Esophagus muscularis mucosa (tissue), 4 donors: ENCODE measurements at regions of chr16 and their contacts with region 1.

Region 1: GRCh38 chr16:69565671-69566239 is at the start of gene NFAT5:
- DNase-seq: peak; percentile 96
- H3K4me3 ChIP-seq: peak within 1 kb of the TSS; percentile 71 to 98 (median 92)
- H3K27ac ChIP-seq: peak within 1 kb of the TSS; percentile 98 to 99 (median 99)
- H3K4me1 ChIP-seq: peaks cover 28 to 55% (median 49%) of the 10 kb centered on the region in 4 donors
- H3K27me3 ChIP-seq: no peaks in the 10 kb centered on the region
- CTCF ChIP-seq: peak in 1 of 3 experiments; percentile 10
- EP300 ChIP-seq: no peak
- POLR2A ChIP-seq: peak; percentile 82
- total RNA-seq, gene NFAT5: 47.1 to 68.4 (median 59.6) TPM

Region 2: DNA sequence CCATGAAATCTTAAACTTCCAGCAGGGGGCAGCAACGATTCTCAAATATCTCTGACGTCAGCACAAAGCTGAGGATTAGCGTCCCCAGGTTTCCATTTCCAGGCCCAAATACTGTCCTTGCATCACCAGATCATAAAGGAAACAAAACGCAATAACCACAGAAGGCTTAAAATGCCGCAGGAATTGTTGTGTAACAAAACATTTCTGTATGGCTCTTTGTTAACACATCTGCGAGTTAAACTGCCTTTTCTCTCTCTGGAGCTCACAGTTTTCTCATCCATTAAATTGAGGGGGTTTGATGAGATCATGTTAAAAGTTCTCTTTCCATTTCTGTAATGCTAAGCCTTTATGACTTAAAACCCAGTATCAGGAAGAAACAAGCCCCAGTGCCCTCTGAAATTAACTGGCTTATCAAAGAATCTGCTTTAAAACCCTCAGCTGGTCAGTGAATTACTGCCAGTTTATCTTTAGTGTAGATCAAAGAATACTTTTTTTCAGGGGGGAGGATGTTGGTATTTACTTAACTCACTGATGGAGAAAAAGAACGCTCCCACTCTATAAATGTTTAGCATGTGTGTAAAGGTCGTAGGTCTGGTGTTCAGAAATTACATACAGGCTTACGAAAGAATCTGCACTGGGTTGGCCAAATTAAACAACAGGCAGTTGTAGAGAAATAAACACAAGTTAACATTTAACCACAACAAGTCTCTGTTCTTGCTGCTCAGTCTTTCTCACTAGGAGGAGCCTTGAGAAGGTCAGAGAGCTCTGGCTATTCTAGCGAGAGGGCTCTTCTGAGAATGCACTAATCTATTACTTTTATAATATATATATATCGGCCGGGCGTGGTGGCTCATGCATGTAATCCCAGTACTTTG is 169.3 kb before region 1 on chr16:
- intact Hi-C with region 1: loop called (anchors 5 kb)
- DNase-seq: no peak
- H3K4me3 ChIP-seq: peak overlapping the region in 1 of 4 donors; percentile 6
- H3K27ac ChIP-seq: peak overlapping the region; percentile 77 to 84 (median 80)
- H3K4me1 ChIP-seq: peaks cover 19 to 31% (median 26%) of the 10 kb centered on the region in 4 donors
- H3K27me3 ChIP-seq: no peaks in the 10 kb centered on the region
- CTCF ChIP-seq: peak; percentile 73 to 82 (median 81)
- EP300 ChIP-seq: no peak
- POLR2A ChIP-seq: no peak

Region 3: DNA sequence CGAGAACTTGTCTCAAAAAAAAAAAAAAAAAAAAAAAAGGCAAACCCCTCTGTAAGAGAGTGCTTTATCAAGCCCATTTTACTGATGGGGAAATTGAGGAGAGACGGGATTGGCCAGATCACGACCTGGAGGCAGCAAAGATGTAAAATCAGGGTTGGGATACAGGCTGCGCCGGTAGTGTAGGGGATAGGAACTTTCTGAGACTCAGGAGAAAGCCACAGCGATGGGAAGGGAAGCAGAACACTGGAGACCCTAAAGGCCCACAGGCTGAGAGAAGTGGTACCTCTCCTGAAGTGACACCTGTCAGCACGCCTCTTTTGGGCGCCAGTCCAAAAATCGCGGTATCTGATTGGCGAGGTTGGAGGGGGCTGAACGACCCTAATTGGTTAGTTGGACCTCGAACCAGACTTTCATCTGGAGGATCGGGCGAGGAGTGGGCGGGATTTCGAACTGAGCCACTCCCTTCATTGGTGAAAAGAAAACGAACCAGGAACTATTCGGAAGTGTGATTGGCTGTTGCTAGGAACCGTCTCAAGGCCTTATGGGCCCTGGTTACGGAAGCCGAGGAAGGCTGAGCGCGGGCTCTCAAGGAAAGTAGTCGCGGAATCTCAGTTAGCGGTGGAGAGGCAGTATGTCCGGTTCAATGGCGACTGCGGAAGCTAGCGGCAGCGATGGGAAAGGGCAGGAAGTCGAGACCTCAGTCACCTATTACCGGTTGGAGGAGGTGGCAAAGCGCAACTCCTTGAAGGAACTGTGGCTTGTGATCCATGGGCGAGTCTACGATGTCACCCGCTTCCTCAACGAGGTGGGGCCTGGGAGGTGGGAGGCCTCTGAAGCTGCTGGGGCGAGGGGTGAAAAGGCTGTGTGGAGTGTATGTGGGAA is 141.5 kb before region 1 on chr16 and contains the start of gene CYB5B:
- intact Hi-C with region 1: loop called (anchors 10 kb)
- DNase-seq: peak; percentile 98
- H3K4me3 ChIP-seq: peak within 1 kb of the TSS; percentile 67 to 85 (median 74)
- H3K27ac ChIP-seq: peak within 1 kb of the TSS; percentile 79 to 86 (median 81)
- H3K4me1 ChIP-seq: peaks cover 11 to 21% (median 18%) of the 10 kb centered on the region in 4 donors
- H3K27me3 ChIP-seq: no peaks in the 10 kb centered on the region
- CTCF ChIP-seq: no peak
- EP300 ChIP-seq: no peak
- POLR2A ChIP-seq: peak; percentile 47
- total RNA-seq, gene CYB5B: 26.7 to 31.2 (median 29.1) TPM

Region 4: GRCh38 chr16:69754469-69755310 is 188.9 kb after region 1 on chr16 and contains the start of gene NOB1:
- intact Hi-C with region 1: loop called (anchors 10 kb)
- DNase-seq: peak; percentile 98
- H3K4me3 ChIP-seq: peak within 1 kb of the TSS; percentile 81 to 90 (median 82)
- H3K27ac ChIP-seq: peak within 1 kb of the TSS; percentile 72 to 84 (median 75)
- H3K4me1 ChIP-seq: peaks cover 18 to 31% (median 22%) of the 10 kb centered on the region in 4 donors
- H3K27me3 ChIP-seq: no peaks in the 10 kb centered on the region
- CTCF ChIP-seq: peak in 2 of 3 experiments; percentile 99 to 100
- EP300 ChIP-seq: no peak
- POLR2A ChIP-seq: peak; percentile 31
- total RNA-seq, gene NOB1: 22.4 to 39.2 (median 30.3) TPM